GM10248 (cell line): ENCODE measurements at regions of chr14 and their contacts with region 1.

Region 1: DNA sequence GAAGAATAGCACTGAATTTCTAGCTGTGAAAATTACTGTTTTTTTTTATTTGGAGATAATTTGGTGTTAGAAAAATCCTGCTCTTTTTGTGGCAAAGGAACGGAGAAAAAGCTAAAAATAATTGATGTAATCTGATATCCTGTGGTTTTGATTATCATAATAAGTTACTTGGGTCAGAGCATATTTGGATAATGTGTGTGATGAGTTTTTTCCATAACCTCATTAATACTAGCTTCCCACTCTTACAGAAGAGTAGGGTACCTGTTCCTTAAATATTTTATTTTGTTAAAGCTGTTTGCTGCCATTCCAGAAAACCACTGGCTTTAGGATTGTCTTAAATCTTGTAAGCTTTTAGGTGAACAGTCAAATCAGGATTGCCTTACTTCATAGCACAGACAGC is 4.7 kb downstream of the PSMC6 start:
- DNase-seq: no peak
- CTCF ChIP-seq: no peak

Region 2: DNA sequence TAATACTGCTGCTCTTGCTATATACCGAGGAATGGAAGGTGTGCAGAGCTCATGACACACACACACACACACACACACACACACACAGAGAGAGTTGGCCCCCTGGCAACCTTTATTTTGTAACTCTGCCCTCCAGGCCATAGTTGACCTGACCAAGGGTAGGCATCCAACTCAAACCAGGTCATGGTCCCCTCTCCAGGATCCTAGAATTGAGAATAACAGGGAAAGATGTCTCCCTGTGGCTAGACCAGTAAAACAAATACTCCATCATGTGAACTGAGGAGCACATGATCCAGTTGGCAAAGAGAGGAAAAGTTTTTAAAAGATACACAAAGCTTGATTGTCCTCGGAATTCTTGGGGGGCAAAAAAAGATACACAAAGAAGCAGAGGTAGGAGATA is 27.6 kb before region 1 on chr14:
- CTCF ChIA-PET with region 1: no interaction called
- POLR2A ChIA-PET with region 1: no interaction called
- DNase-seq: no peak
- CTCF ChIP-seq: no peak

Region 3: GRCh38 chr14:52724360-52724644 is 12.6 kb after region 1 on chr14:
- CTCF ChIA-PET with region 1: interaction called, 20 read pairs
- POLR2A ChIA-PET with region 1: interaction called, 7 read pairs
- DNase-seq: no peak
- CTCF ChIP-seq: no peak